Activated CD4-positive, alpha-beta memory T cell treated with anti-CD3 and anti-CD28 coated beads for 36 hours (primary cell): ENCODE measurements at regions of chr19 and their contacts with region 1.

Region 1: DNA sequence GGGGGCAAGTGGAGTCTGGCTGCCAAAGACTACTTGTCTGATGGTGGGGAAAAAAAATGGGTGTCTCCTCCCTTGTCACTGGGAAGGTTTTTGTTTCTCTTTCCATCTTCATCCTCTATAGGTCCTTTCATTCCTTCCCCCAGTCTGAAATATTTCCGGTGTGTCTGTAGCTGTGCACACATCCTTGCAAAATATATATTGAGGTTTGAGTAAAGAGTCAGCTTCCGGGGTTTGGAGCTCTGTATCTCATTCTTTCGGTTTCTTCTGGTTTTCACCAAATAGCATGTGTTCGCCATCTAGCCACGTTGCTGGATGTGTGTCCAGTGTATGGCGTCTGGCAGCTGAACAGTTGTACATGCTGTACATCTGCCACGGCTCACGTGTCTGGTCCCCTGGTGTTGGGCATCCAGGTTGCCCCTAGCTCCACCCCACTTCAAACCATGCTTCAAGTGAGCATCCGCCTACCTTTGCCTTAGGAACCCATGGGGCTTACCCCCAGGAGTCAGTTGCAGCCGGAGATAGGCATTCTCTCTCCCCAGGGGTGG is 142.2 kb downstream of the SIPA1L3 start:
- DNase-seq: peak; percentile 74
- H3K4me3 Mint-ChIP-seq: peak overlapping the region; percentile 68
- H3K27ac Mint-ChIP-seq: peak overlapping the region; percentile 96
- H3K4me1 Mint-ChIP-seq: peaks cover 46% of the 10 kb centered on the region
- H3K27me3 Mint-ChIP-seq: no peaks in the 10 kb centered on the region

Region 2: DNA sequence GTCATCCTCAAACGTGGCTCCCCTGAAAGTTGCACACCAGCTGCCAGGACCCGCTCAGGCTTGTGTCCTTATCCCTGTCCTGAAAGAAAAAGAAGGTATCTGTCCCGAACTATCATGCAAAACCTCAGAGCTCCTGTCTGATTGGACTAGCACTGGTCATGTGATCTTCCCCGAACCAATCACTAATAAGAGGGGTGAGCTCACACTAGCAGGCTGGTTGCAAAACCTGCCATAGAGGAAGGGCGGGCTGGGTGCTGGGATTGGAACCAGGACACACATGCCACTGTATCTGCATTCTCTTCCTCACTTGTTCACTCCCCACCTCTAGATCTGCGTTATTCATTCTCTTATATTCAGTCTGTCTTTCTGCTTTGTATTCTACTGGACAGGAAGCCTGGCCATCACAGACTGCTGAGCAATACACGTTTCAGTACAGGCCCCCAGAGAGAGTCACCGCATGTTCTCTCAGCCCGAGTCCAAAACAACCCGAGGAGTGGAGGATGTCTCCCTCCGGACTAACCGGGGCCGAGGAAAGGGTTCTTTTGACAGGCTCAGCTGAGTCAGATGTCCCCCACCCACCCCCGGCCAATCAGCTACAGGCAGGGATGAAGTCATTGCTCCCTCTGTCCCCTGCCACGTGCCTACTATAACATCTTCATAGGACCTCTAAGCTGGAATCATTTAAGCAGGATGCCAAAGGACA is 44.5 kb before region 1 on chr19:
- CTCF ChIA-PET with region 1: no interaction called
- POLR2A ChIA-PET with region 1: interaction called, 7 read pairs
- intact Hi-C with region 1: loop called (anchors 1 kb)
- DNase-seq: peak; percentile 29
- H3K4me3 Mint-ChIP-seq: no peak overlapping the region
- H3K27ac Mint-ChIP-seq: no peak overlapping the region
- H3K4me1 Mint-ChIP-seq: peaks cover 8% of the 10 kb centered on the region
- H3K27me3 Mint-ChIP-seq: no peaks in the 10 kb centered on the region